ENCODE measurements at regions of chr11 and their contacts with region 1.

Region 1: GRCh38 chr11:14052198-14052597 is 89.7 kb downstream of the SPON1 start:
- DNase-seq: peak in 2 of 9 donors; percentile 8 to 23
- ATAC-seq: peak; percentile 32
- H3K4me3 ChIP-seq: no peak overlapping the region
- H3K4me3 Mint-ChIP-seq: peak overlapping the region in 1 of 10 donors; percentile 4
- H3K27ac ChIP-seq: no peak overlapping the region
- H3K27ac Mint-ChIP-seq: peak overlapping the region in 4 of 9 donors; percentile 5 to 79 (median 28)
- H3K4me1 ChIP-seq: peaks cover 0 to 10% of the 10 kb centered on the region in 2 donors
- H3K4me1 Mint-ChIP-seq: peaks cover 12 to 38% (median 27%) of the 10 kb centered on the region in 7 donors
- H3K27me3 ChIP-seq: peaks cover 0 to 6% of the 10 kb centered on the region in 2 donors
- H3K27me3 Mint-ChIP-seq: peaks cover 0 to 15% (median 0%) of the 10 kb centered on the region in 5 donors

Region 2: DNA sequence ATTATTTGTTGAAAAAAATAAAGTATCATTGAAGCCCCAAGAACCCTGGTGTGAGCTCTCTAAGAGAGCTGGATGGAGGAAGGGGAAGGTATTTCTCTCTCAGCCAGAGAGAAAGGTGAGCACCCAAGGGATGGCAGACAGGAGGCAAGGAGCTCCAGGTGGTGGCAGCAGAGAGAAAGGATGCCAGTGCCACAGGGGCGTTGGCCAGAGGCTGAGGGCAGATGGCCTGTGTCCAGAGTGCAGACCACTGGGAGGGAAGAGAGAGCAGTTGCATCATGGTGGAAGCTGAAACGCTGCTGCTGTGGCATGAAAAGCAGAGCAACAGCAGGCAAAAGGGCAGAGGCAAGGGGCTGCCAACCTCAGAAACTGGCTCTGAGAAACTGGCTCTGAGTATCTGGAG is 81.2 kb before region 1 on chr11:
- CTCF ChIA-PET with region 1: no interaction called
- POLR2A ChIA-PET with region 1: interaction called, 10 read pairs
- intact Hi-C with region 1: no loop called
- DNase-seq: no peak
- ATAC-seq: no peak
- H3K4me3 ChIP-seq: no peak overlapping the region
- H3K4me3 Mint-ChIP-seq: no peak overlapping the region
- H3K27ac ChIP-seq: no peak overlapping the region
- H3K27ac Mint-ChIP-seq: peak overlapping the region in 4 of 9 donors; percentile 7 to 63 (median 11)
- H3K4me1 ChIP-seq: no peaks in the 10 kb centered on the region
- H3K4me1 Mint-ChIP-seq: peaks cover 5 to 14% (median 9%) of the 10 kb centered on the region in 7 donors
- H3K27me3 ChIP-seq: no peaks in the 10 kb centered on the region
- H3K27me3 Mint-ChIP-seq: peaks cover 6 to 33% (median 11%) of the 10 kb centered on the region in 5 donors